HCT116 (cell line): ENCODE measurements at regions of chr5 and their contacts with region 1.

Region 1: GRCh38 chr5:151651997-151652645 is 34.6 kb downstream of the SPARC start:
- DNase-seq: peak; percentile 64
- ATAC-seq: peak; percentile 99
- H3K4me3 ChIP-seq: no peak overlapping the region
- H3K27ac ChIP-seq: no peak overlapping the region
- H3K4me1 ChIP-seq: no peaks in the 10 kb centered on the region; a peak in 1 of 4 replicates
- H3K27me3 ChIP-seq: no peaks in the 10 kb centered on the region
- CTCF ChIP-seq: peak; percentile 89 to 94 (median 93)
- POLR2A ChIP-seq: no peak
- RAD21 ChIP-seq: peak; percentile 98

Region 2: DNA sequence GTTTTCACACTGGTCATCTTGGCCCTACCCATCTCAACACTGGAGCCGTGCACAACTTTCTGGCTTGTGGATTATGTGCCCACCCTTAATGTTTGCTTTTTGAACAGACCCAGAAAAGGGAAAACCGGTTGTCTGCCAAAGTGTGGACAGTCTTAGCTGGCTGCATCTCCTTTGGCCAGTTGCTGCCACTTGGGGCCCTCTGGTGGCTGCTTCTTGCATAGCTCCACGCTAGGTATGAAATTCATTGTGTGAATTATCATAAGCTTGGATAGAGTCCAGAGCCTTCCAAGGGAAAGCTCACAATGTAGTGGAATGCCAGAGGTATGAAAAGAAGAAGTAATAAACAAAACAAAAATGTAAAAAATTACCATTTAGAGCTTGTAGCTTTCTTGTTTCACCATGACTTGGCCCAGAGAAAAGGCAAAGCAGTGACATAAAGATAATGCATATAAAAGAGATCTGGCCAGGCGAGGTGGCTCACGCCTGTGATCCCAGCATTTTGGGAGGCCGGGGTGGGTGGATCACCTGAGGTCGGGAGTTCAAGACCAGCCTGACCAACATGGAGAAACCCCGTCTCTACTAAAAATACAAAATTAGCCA is 336.0 kb before region 1 on chr5:
- CTCF ChIA-PET with region 1: interaction called, 5 read pairs
- POLR2A ChIA-PET with region 1: no interaction called
- RAD21 ChIA-PET with region 1: interaction called in 1 of 2 experiments, 3 read pairs
- intact Hi-C with region 1: loop called (anchors 2 kb)
- DNase-seq: peak; percentile 37
- ATAC-seq: peak; percentile 91
- H3K4me3 ChIP-seq: no peak overlapping the region
- H3K27ac ChIP-seq: no peak overlapping the region
- H3K4me1 ChIP-seq: no peaks in the 10 kb centered on the region
- H3K27me3 ChIP-seq: no peaks in the 10 kb centered on the region
- CTCF ChIP-seq: peak; percentile 86 to 95 (median 93)
- POLR2A ChIP-seq: no peak
- RAD21 ChIP-seq: peak; percentile 89

Region 3: DNA sequence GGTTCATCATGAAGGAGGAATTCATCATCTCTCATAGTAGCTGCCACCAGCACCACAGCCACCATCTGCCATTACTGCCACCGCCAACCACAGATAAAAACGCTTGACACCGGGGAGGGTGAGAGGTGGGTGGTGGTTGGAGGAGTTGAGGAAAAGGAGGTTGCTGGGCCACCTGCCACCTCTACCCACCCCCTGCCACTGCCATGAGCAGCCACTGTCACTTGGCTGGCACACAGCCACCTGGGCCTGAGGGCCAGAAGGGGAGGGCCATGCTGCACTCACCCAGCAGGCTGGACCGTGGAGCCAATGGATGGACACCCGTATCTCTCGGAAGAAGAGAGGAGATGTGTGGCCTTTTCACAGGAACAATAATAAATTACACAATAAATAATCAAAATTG is 273.5 kb before region 1 on chr5:
- CTCF ChIA-PET with region 1: no interaction called
- POLR2A ChIA-PET with region 1: no interaction called
- RAD21 ChIA-PET with region 1: no interaction called
- intact Hi-C with region 1: no loop called
- DNase-seq: no peak
- ATAC-seq: no peak
- H3K4me3 ChIP-seq: no peak overlapping the region
- H3K27ac ChIP-seq: no peak overlapping the region
- H3K4me1 ChIP-seq: no peaks in the 10 kb centered on the region
- H3K27me3 ChIP-seq: no peaks in the 10 kb centered on the region
- CTCF ChIP-seq: no peak
- POLR2A ChIP-seq: no peak
- RAD21 ChIP-seq: no peak

Region 4: DNA sequence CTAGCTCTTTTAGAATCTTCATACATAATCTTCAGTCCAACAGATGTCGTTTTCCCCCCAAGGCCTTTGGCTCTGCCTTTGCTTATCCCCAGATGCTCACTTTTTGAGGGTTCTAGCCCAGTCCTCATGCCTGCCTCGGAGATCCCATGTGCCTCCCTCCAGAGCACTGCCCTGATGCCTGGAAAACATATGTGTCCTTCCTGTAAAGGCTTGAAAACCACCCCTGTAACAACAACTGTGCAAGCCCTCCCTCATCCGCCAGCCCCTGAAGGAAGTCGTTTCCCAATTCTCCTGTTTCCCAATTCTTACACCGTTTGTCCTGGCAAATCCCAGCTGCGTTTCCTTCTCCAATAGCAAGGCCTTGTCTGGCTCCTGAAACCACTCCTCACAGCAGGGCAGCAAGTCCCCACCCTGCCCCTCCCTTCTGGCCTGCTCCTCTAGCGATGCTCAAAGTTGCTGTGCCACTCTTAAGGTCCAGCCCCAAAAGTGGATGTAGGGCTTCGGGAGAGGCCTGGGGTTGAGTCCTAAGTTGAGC is 152.6 kb before region 1 on chr5:
- CTCF ChIA-PET with region 1: interaction called, 13 read pairs
- POLR2A ChIA-PET with region 1: no interaction called
- RAD21 ChIA-PET with region 1: interaction called in 1 of 2 experiments, 3 read pairs
- intact Hi-C with region 1: loop called (anchors 1 kb)
- DNase-seq: no peak
- ATAC-seq: no peak
- H3K4me3 ChIP-seq: no peak overlapping the region
- H3K27ac ChIP-seq: no peak overlapping the region
- H3K4me1 ChIP-seq: peaks cover 0 to 2% of the 10 kb centered on the region in 2 experiments; a peak in 1 of 4 replicates
- H3K27me3 ChIP-seq: no peaks in the 10 kb centered on the region
- CTCF ChIP-seq: no peak
- POLR2A ChIP-seq: no peak
- RAD21 ChIP-seq: no peak

Region 5: DNA sequence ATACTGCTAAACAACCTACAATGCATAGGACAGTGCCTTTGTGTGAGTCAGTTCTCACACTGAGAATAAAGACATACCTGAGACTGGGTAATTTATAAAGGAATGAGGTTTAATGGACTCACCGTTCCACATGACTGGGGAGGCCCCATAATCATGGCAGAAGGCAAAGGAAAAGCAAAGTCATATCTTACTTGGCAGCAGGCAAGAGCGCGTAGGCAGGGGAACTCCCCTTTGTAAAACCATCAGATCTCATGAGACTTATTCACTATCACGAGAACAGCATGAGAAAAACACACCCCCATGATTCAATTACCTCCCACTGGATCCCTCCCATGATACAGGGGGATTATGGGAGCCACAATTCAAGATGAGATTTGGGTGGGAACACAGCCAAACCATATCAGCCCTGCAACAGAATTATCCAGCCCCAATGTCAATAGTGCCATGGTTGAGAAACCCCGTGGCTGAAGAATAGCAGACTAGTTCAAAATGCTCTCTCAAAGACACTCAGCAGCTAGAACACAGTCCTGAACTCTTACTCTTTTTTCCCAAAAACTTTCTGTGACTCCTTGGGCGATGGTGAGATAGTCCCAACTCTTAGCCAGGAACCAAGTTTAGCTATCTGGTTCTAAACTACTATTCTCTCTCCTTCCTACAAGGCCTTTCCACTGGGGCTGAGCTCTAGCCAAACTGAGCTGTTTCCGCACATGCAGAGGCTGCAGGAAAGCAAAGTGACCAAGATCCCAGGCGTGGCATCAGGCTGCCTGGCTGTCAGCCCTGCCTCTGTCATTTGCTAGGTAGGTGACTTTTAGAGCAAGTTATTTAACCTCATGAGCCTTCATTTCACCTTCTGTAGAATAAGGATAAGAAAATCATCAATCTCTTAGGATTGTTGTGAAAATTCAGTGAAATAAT is 82.7 kb before region 1 on chr5:
- CTCF ChIA-PET with region 1: no interaction called
- POLR2A ChIA-PET with region 1: no interaction called
- RAD21 ChIA-PET with region 1: no interaction called
- intact Hi-C with region 1: no loop called
- DNase-seq: no peak
- ATAC-seq: no peak
- H3K4me3 ChIP-seq: no peak overlapping the region
- H3K27ac ChIP-seq: no peak overlapping the region
- H3K4me1 ChIP-seq: peaks cover 24 to 32% of the 10 kb centered on the region in 2 experiments
- H3K27me3 ChIP-seq: no peaks in the 10 kb centered on the region
- CTCF ChIP-seq: no peak
- POLR2A ChIP-seq: no peak
- RAD21 ChIP-seq: no peak

Region 6: DNA sequence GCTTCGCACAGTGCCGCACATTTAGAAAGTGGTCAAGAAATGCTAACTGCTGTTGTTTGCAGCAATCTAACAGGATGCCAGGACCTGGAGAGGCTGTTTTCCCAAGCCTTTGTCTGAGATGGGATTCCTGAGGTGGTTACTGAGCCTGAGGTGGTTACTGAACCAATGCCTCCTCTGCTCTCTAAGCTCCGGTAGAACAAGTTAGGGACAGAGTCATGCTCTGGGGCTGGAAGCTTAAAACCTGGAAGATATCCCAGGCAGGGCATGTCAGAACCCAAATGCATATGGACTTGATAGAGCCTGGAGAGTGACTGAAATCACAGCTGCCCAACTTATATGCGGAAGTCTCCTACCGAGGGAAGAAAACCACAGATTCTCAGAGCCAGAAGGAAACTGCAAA is 14.4 kb before region 1 on chr5:
- CTCF ChIA-PET with region 1: interaction called, 15 read pairs
- POLR2A ChIA-PET with region 1: no interaction called
- RAD21 ChIA-PET with region 1: no interaction called
- intact Hi-C with region 1: no loop called
- DNase-seq: no peak
- ATAC-seq: no peak
- H3K4me3 ChIP-seq: no peak overlapping the region
- H3K27ac ChIP-seq: no peak overlapping the region
- H3K4me1 ChIP-seq: peaks cover 2 to 6% of the 10 kb centered on the region in 2 experiments; a peak in 2 of 4 replicates
- H3K27me3 ChIP-seq: peaks cover 16% of the 10 kb centered on the region; the same call in 1 of the 2 replicates
- CTCF ChIP-seq: no peak
- POLR2A ChIP-seq: no peak
- RAD21 ChIP-seq: no peak